ENCODE measurements at regions of chrX and their contacts with region 1.

Region 1: GRCh38 chrX:69285881-69286564 is 120.8 kb upstream of the PJA1 start:
- DNase-seq: peak; percentile 72
- ATAC-seq: peak; percentile 66
- H3K4me3 Mint-ChIP-seq: peak overlapping the region; percentile 10
- H3K27ac Mint-ChIP-seq: no peak overlapping the region
- H3K4me1 Mint-ChIP-seq: no peaks in the 10 kb centered on the region
- H3K27me3 Mint-ChIP-seq: peaks cover 2% of the 10 kb centered on the region

Region 2: DNA sequence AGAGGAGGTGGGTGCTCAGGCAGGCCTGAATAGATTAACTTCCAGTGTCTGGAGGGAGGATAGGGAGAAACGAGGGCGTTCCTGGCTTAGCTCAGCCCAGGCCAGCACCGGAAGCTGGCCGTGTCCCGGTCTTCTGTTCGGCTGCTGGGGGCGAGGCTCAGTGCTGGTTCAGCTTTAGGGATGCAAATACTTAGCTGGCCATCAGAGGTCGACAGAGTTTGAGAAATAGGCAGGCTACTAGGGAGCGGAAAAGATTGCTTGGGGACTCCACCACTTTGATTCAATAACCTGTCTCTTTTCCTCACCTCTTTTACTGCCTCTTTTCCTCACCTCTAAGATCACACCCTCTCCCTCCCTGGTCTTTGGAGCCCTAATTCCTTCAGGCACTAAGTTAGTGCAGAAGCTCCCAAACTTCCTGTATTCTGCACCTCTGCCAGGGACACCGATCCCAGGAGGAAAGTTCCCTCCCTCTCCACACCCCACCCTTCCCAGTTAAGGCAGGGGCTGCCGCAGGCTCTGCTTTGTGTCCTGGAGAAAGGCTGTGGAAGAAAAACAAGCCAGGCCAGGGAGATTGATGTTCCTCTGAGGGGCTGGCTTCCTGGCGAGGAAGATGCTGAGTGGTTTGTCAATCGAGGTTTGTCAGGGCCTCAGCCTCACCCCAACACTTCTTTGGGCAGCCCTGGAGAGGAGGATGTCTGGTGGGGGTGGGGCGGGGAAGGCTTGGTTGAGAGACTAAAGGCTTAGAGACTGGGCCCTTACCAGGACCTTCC is 463.2 kb before region 1 on chrX:
- CTCF ChIA-PET with region 1: interaction called, 4 read pairs
- POLR2A ChIA-PET with region 1: no interaction called
- intact Hi-C with region 1: loop called (anchors 1 to 5 kb)
- DNase-seq: peak; percentile 39
- ATAC-seq: peak; percentile 82
- H3K4me3 Mint-ChIP-seq: no peak overlapping the region
- H3K27ac Mint-ChIP-seq: no peak overlapping the region
- H3K4me1 Mint-ChIP-seq: peaks cover 3% of the 10 kb centered on the region
- H3K27me3 Mint-ChIP-seq: no peaks in the 10 kb centered on the region

Region 3: DNA sequence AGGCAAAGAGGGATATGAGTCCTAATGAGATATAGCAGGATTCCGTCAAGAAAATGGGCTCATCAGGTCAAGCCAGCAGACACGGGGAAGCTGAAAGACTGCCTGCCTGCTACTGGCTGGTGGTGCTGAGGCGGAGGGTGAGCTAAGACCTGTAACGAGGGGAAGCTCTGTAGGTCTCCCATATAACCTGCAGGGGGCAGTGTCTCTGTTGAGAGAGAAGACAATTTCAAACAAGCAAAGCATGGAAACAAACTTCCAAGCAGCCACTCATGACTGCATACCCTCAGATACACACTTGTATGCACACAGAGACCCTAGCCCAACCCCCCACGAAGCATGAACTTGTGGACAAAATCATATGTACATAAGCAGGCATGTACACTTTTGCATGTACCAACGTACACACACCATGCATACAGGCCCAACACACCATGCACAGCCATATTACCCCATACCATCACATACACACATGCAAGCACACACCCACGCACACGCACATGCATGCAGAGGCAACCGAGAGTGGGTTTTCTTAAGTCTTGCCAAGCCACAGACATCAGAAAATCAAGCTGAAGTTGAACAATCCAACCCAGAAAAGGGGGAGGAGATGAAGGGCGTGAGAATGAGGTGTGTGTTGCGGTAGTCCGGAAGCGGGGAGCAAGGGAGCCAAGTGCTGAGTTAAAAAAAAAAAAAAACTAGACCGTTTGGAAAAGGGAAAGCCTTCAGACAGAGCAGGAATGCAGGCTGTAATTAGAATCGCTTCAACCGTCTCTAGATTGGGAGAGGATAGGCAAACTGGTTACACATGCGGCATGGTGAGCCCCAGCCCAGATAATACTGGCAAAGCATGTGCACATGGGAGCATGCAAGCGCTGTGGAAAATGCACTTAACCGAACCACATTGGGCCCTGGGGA is 191.8 kb before region 1 on chrX:
- CTCF ChIA-PET with region 1: no interaction called
- POLR2A ChIA-PET with region 1: no interaction called
- intact Hi-C with region 1: loop called in 1 of 2 experiments (anchors 5 kb)
- DNase-seq: peak; percentile 49
- ATAC-seq: peak; percentile 58
- H3K4me3 Mint-ChIP-seq: no peak overlapping the region
- H3K27ac Mint-ChIP-seq: no peak overlapping the region
- H3K4me1 Mint-ChIP-seq: no peaks in the 10 kb centered on the region
- H3K27me3 Mint-ChIP-seq: no peaks in the 10 kb centered on the region